ENCODE measurements at regions of chr3 and their contacts with region 1.

Region 1: DNA sequence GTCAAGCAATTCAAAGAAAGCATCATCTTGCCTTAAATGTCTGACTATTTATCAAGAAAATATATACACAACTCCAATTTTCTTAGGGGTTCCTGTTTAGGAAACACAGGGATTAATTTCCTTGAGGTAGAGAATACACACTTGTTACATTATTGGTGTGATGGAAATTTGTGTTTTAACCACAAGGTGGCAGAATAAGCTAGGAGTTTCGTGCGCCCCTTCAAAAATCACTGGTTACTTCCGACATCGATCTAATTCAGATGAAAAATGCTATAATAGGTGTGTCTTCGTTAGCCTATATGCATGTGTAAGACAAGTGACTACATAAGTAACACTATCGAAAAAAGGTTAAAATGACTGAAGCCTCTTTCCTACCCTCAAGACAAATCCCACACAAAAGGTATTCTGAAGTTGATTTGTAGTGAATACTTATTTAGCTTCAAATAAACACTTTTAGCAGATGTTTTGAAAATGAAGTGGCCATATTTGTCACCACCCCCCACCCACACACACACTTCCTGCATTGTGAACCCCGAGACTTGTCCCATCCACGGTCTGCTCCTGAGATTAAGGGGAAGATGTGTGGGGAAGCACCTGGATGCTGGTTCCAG is 246.5 kb downstream of the ROBO1 start:
- DNase-seq: no peak
- ATAC-seq: no peak

Region 2: GRCh38 chr3:79751703-79752102 is 230.4 kb after region 1 on chr3:
- intact Hi-C with region 1: no loop called
- DNase-seq: no peak
- ATAC-seq: no peak

Region 3: GRCh38 chr3:79773291-79773690 is 251.9 kb after region 1 on chr3:
- intact Hi-C with region 1: no loop called
- DNase-seq: no peak
- ATAC-seq: no peak

Region 4: GRCh38 chr3:80688814-80689213 is 1167.5 kb after region 1 on chr3:
- intact Hi-C with region 1: loop called (anchors 5 to 10 kb)
- DNase-seq: no peak
- ATAC-seq: no peak

Measured in left cardiac atrium (tissue), 4 donors.